ENCODE measurements at regions of chr14 and their contacts with region 1.

Region 1: GRCh38 chr14:51094901-51095853 is at the start of gene TRIM9:
- DNase-seq: peak; percentile 75 to 96 (median 91)
- ATAC-seq: peak; percentile 94
- H3K4me3 ChIP-seq: peak within 1 kb of the TSS; percentile 72 to 81
- H3K4me3 Mint-ChIP-seq: peak within 1 kb of the TSS; percentile 93
- H3K27ac ChIP-seq: peak within 1 kb of the TSS; percentile 26 to 52
- H3K27ac Mint-ChIP-seq: peak within 1 kb of the TSS; percentile 81
- H3K4me1 ChIP-seq: peaks cover 17% of the 10 kb centered on the region
- H3K4me1 Mint-ChIP-seq: peaks cover 18% of the 10 kb centered on the region
- H3K27me3 ChIP-seq: peaks cover 0 to 10% of the 10 kb centered on the region in 2 experiments
- H3K27me3 Mint-ChIP-seq: peaks cover 3% of the 10 kb centered on the region
- CTCF ChIP-seq: no peak
- total RNA-seq, gene TRIM9: 0.57 to 0.64 TPM

Region 2: DNA sequence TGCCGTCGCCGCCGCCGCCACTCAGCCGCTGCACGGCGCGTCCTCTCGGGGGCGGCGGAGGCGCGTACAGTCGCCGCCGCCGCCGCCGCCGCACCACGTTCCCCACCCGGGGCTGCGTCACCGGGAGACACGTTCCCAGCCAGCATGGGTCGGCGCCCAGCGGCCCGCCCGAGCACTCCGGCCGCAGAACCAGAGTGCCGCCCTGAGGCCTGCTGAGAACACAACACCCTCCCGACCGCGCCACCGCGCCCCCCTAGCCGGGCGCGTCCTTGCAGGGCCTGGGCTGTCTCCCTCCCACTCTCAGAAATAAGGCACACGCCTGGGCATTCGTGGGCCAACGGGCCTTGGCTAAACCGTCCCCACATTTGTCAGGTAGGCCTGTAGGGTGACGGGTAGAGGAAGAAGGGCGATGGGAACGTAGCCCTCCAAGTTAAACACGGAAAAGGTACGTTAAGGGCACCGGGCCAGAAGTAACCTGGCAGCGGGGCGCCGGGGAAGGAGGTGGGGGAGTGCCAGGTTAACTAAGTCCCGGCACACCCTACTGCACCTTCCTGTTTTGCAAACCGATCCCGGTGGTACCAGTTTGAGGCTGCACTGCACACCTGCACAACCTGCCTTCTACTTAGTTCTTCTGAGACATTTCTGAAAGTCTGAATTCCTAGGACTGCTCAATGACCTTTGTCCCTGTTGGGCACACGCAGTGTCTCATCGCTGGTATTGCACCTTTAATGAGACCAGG is 562.5 kb before region 1 on chr14 and contains the start of gene MAP4K5:
- CTCF ChIA-PET with region 1: no interaction called
- POLR2A ChIA-PET with region 1: no interaction called
- intact Hi-C with region 1: loop called in 1 of 2 experiments (anchors 2 kb)
- DNase-seq: peak; percentile 73 to 95 (median 88)
- ATAC-seq: peak; percentile 93
- H3K4me3 ChIP-seq: peak within 1 kb of the TSS; percentile 45 to 88
- H3K4me3 Mint-ChIP-seq: peak within 1 kb of the TSS; percentile 89
- H3K27ac ChIP-seq: peak within 1 kb of the TSS; percentile 47 to 70
- H3K27ac Mint-ChIP-seq: peak within 1 kb of the TSS; percentile 92
- H3K4me1 ChIP-seq: peaks cover 42% of the 10 kb centered on the region
- H3K4me1 Mint-ChIP-seq: peaks cover 49% of the 10 kb centered on the region
- H3K27me3 ChIP-seq: no peaks in the 10 kb centered on the region
- H3K27me3 Mint-ChIP-seq: no peaks in the 10 kb centered on the region
- CTCF ChIP-seq: peak; percentile 69
- total RNA-seq, gene MAP4K5: 32.0 to 32.7 TPM

Region 3: DNA sequence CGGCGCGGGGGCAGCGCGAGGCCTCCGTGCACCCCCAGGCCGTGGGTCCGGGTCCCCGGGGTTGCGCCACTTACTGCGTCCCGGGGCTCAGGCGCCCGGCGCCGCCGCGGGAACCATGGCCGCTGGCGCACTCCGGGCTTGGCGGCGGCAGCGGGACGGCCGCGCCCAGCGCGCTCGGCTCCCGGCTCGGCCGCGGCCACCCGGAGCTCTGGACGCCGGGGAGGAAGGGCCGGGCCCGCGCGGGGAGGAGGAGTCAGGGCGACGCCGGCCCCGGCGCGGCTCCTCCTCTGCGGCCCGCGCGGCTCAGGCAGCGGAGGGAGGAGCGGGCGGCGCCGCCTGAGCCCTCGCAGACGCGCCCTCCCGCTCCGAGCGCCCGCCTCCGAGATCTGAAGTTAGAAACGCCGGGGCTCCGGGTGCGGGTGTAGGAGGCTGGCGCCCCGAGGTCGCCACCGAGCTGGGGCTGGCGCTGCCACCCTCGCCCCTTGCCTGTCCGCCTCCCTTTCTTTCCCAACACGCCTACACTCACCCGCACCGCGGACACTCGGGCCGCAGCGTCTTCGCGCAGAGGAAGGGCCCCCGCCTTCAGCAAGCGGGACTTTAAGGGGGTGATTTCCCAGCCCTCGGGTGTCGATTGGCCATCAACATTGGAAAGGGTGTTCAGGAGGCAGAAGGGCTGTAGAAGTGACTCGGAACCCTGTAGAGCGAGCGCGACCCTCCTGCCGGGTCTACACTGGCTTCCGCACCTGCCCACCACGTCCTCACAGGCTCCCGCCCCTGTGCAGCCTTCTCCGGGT is 264.0 kb before region 1 on chr14 and contains the start of gene NIN:
- CTCF ChIA-PET with region 1: no interaction called
- POLR2A ChIA-PET with region 1: no interaction called
- intact Hi-C with region 1: loop called (anchors 10 kb)
- DNase-seq: peak; percentile 44 to 89 (median 75)
- ATAC-seq: peak; percentile 80
- H3K4me3 ChIP-seq: peak within 1 kb of the TSS; percentile 79 to 86
- H3K4me3 Mint-ChIP-seq: peak within 1 kb of the TSS; percentile 97
- H3K27ac ChIP-seq: peak within 1 kb of the TSS; percentile 76 to 87
- H3K27ac Mint-ChIP-seq: peak within 1 kb of the TSS; percentile 98
- H3K4me1 ChIP-seq: peaks cover 50% of the 10 kb centered on the region
- H3K4me1 Mint-ChIP-seq: peaks cover 68% of the 10 kb centered on the region
- H3K27me3 ChIP-seq: no peaks in the 10 kb centered on the region
- H3K27me3 Mint-ChIP-seq: no peaks in the 10 kb centered on the region
- CTCF ChIP-seq: no peak
- total RNA-seq, gene NIN: 121 to 132 TPM

Region 4: GRCh38 chr14:51651388-51652167 is 556.4 kb after region 1 on chr14 and contains the start of gene FRMD6:
- CTCF ChIA-PET with region 1: no interaction called
- POLR2A ChIA-PET with region 1: no interaction called
- intact Hi-C with region 1: loop called (anchors 5 to 10 kb)
- DNase-seq: peak; percentile 58 to 90 (median 76)
- ATAC-seq: peak; percentile 82
- H3K4me3 ChIP-seq: peak within 1 kb of the TSS; percentile 87 to 94
- H3K4me3 Mint-ChIP-seq: peak within 1 kb of the TSS; percentile 85
- H3K27ac ChIP-seq: peak within 1 kb of the TSS; percentile 55 to 73
- H3K27ac Mint-ChIP-seq: peak within 1 kb of the TSS; percentile 73
- H3K4me1 ChIP-seq: peaks cover 19% of the 10 kb centered on the region
- H3K4me1 Mint-ChIP-seq: peaks cover 17% of the 10 kb centered on the region
- H3K27me3 ChIP-seq: peaks cover 6 to 16% of the 10 kb centered on the region in 2 experiments
- H3K27me3 Mint-ChIP-seq: peaks cover 21% of the 10 kb centered on the region
- CTCF ChIP-seq: peak; percentile 70
- total RNA-seq, gene FRMD6: 2.4 to 3.5 TPM